Activated CD8-positive, alpha-beta T cell treated with anti-CD3 and anti-CD28 coated beads for 36 hours (primary cell): ENCODE measurements at regions of chr12 and their contacts with region 1.

Region 1: GRCh38 chr12:85866986-85867776 is 6.9 kb upstream of the NTS start:
- DNase-seq: peak; percentile 39
- ATAC-seq: peak; percentile 58
- H3K4me3 Mint-ChIP-seq: no peak overlapping the region
- H3K27ac Mint-ChIP-seq: no peak overlapping the region
- H3K4me1 Mint-ChIP-seq: no peaks in the 10 kb centered on the region
- H3K27me3 Mint-ChIP-seq: no peaks in the 10 kb centered on the region
- CTCF ChIP-seq: peak; percentile 56

Region 2: DNA sequence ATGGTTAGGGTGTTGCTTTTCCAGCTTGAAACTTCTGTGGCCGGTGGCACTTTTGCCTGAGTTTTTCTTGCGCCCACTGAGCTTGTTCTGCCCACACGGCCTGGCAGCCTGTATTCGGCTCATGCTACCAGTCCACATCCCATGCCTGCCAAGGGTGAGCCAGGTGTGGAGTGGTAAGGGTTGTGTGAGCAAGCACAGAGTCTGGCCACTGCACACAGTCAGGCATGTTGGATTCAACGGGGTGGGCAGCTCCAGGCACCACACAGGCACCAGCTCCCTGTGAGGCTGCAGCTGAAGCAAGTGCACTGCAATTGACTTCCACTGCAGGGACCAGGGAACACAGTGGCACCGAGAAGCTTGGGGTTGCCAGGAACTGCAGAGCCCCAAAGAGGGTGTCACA is 11.9 kb before region 1 on chr12:
- CTCF ChIA-PET with region 1: interaction called, 14 read pairs
- POLR2A ChIA-PET with region 1: no interaction called
- intact Hi-C with region 1: no loop called
- DNase-seq: no peak
- ATAC-seq: no peak
- H3K4me3 Mint-ChIP-seq: no peak overlapping the region
- H3K27ac Mint-ChIP-seq: no peak overlapping the region
- H3K4me1 Mint-ChIP-seq: no peaks in the 10 kb centered on the region
- H3K27me3 Mint-ChIP-seq: no peaks in the 10 kb centered on the region
- CTCF ChIP-seq: no peak